ENCODE measurements at regions of chr6 and their contacts with region 1.

Region 1: DNA sequence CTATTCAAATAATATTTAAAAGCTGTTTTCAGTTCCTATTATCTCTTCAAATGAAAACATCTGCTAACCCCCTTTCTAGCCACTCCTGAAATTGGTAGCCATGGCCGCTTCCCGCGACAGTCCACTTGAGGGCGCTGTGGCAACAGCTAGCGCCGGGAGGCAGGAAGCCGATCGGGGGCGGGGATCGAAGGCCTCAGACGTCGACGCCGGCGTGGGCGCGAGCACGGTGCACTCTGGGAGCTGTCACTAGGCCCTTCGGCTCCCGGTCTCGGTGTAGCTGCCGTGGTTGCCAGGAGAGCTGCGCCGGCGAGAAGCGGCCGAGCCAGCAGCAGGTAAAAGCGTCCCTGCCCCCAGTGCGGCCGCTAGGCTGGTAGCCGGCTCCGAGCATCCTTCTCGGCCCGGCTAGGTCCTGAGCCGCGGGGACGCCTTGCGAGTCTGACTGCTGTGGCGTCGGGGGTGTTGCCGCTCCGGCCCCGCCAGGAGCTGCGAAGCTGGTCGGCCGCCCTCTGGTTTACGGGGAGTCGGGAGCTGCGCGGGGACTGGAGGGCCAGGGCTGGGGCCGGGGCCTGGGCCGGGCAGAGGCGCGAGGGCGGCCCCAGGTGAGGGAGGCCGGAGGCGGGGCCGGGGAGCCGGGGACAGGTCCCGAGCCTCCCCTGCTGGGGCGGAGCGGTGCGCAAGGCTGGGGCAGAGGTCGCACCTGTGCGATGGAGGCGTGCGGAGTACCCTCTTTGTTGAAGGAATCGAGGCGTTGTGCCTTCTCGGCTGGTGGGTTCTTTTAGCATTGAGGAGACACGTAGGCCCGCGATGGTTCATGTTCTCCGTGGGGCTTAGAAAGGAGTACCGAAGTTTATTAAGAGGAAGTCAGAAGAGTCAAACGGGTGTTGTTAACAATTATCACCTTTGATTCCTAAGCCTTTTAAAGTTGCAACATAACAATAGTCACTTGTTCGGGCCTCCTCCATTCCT is at the start of gene DOP1A:
- DNase-seq: peak; percentile 93 to 98
- ATAC-seq: peak; percentile 86 to 96 (median 88)
- H3K4me3 ChIP-seq: peak within 1 kb of the TSS; percentile 98
- H3K4me3 Mint-ChIP-seq: peak within 1 kb of the TSS; percentile 94
- H3K27ac ChIP-seq: peak within 1 kb of the TSS; percentile 96
- H3K27ac Mint-ChIP-seq: peak within 1 kb of the TSS; percentile 86 to 95
- H3K4me1 ChIP-seq: peaks cover 15% of the 10 kb centered on the region
- H3K4me1 Mint-ChIP-seq: peaks cover 31 to 37% of the 10 kb centered on the region in 2 donors
- H3K27me3 ChIP-seq: no peaks in the 10 kb centered on the region
- H3K27me3 Mint-ChIP-seq: no peaks in the 10 kb centered on the region
- CTCF ChIP-seq: peak; percentile 90
- total RNA-seq, gene DOP1A: 23.5 to 36.7 (median 30.1) TPM

Region 2: DNA sequence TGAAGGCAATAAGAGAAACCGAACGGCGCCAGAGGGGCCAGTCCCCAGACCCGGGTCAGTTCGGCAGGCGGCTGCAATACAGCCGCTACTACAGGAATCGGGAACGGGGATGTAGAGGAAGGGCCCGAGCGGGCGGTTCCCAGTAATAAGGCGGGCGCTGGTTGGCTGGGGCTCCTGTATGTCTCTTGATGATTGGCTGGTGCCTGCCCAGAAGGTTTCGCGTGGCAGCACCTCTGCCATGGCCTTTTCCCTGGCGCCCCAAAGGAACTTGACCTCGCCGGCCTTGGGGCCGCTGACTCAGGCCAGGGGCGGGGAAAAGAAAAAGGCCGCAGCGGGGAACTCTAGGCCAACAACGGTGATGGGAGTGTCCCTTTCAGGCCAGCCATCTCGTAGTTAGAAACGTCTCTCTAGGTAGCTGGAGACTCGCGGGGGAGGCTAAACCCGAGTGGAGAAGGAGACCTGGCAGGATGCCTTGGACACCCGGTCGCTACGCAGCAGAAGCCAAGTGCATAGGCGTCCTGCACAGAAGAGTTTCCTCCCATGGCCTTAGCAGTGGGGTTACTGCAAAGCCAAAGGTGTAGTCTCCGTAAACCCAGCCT is 820.0 kb before region 1 on chr6 and contains the start of gene IBTK:
- intact Hi-C with region 1: loop called (anchors 5 kb)
- DNase-seq: peak; percentile 92 to 94
- ATAC-seq: peak; percentile 89 to 94 (median 93)
- H3K4me3 ChIP-seq: peak within 1 kb of the TSS; percentile 73
- H3K4me3 Mint-ChIP-seq: peak within 1 kb of the TSS; percentile 97
- H3K27ac ChIP-seq: peak within 1 kb of the TSS; percentile 70
- H3K27ac Mint-ChIP-seq: peak within 1 kb of the TSS; percentile 94 to 97
- H3K4me1 ChIP-seq: peaks cover 18% of the 10 kb centered on the region
- H3K4me1 Mint-ChIP-seq: peaks cover 32 to 40% of the 10 kb centered on the region in 2 donors
- H3K27me3 ChIP-seq: no peaks in the 10 kb centered on the region
- H3K27me3 Mint-ChIP-seq: no peaks in the 10 kb centered on the region
- CTCF ChIP-seq: no peak
- total RNA-seq, gene IBTK: 18.3 to 23.5 (median 22.2) TPM

Region 3: GRCh38 chr6:83192871-83193746 is 125.4 kb after region 1 on chr6 and contains the starts of genes PGM3 and RWDD2A:
- intact Hi-C with region 1: loop called (anchors 1 kb)
- DNase-seq: peak; percentile 90 to 95
- ATAC-seq: peak; percentile 97 to 98 (median 97)
- H3K4me3 ChIP-seq: peak within 1 kb of the TSS; percentile 73
- H3K4me3 Mint-ChIP-seq: peak within 1 kb of the TSS; percentile 99
- H3K27ac ChIP-seq: peak within 1 kb of the TSS; percentile 48
- H3K27ac Mint-ChIP-seq: peak within 1 kb of the TSS; percentile 90 to 99
- H3K4me1 ChIP-seq: peaks cover 19% of the 10 kb centered on the region
- H3K4me1 Mint-ChIP-seq: peaks cover 18 to 20% of the 10 kb centered on the region in 2 donors
- H3K27me3 ChIP-seq: no peaks in the 10 kb centered on the region
- H3K27me3 Mint-ChIP-seq: no peaks in the 10 kb centered on the region
- CTCF ChIP-seq: no peak
- total RNA-seq, gene PGM3: 16.6 to 26.4 (median 17.2) TPM
- total RNA-seq, gene RWDD2A: 0.86 to 1.1 (median 0.93) TPM

Region 4: DNA sequence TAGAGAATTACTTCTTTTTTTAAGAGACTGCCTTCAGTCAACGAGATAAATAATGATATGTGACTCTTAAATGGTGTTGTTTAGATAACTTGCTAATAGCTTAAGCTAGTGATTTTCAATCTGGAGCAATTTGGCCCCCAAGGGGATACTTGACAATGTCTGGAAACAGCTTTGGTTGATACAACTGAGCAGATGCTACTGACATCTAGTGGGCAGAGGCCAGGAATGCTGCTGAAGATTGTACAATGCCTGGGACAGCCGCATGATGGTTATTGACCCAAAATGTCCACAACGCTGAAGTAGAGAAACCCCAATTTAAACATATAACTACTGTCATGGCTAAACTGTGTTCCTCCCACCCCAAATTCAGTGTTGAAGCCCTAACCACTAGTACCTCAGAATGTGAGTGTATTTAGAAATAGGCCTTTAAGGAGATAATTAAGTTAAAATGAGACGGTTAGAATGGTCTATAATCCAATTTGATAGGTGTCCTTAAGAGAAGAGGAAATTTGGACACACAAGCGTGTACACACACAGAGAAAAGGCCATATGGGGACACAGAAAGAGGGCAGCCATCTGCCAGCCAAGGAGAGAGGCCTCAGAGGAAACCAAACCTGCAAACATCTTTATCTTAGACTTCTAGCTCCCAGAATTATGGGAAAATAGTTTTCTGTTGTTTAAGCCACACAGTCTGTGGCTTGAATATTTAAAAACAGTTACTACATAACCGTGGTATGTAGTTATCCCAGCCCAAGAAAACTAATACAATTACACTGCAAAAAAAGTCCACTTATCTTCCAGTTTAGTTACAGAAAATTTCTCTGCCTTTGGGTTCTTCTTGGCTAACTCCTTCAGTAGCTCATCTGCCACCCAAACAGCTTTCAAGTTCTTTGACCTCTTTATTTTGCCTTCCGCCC is 147.7 kb after region 1 on chr6:
- intact Hi-C with region 1: loop called (anchors 5 kb)
- DNase-seq: peak in 1 of 2 donors; percentile 75
- ATAC-seq: peak; percentile 86 to 97 (median 96)
- H3K4me3 ChIP-seq: no peak overlapping the region
- H3K4me3 Mint-ChIP-seq: no peak overlapping the region
- H3K27ac ChIP-seq: no peak overlapping the region
- H3K27ac Mint-ChIP-seq: no peak overlapping the region
- H3K4me1 ChIP-seq: no peaks in the 10 kb centered on the region
- H3K4me1 Mint-ChIP-seq: peaks cover 0 to 4% of the 10 kb centered on the region in 2 donors
- H3K27me3 ChIP-seq: no peaks in the 10 kb centered on the region
- H3K27me3 Mint-ChIP-seq: peaks cover 15 to 16% of the 10 kb centered on the region in 2 donors
- CTCF ChIP-seq: peak; percentile 62

Region 5: GRCh38 chr6:83514866-83515466 is 447.2 kb after region 1 on chr6:
- intact Hi-C with region 1: loop called (anchors 2 kb)
- DNase-seq: peak in 1 of 2 donors; percentile 59
- ATAC-seq: peak; percentile 52 to 61 (median 54)
- H3K4me3 ChIP-seq: no peak overlapping the region
- H3K4me3 Mint-ChIP-seq: no peak overlapping the region
- H3K27ac ChIP-seq: no peak overlapping the region
- H3K27ac Mint-ChIP-seq: no peak overlapping the region
- H3K4me1 ChIP-seq: peaks cover 10% of the 10 kb centered on the region
- H3K4me1 Mint-ChIP-seq: peaks cover 10 to 17% of the 10 kb centered on the region in 2 donors
- H3K27me3 ChIP-seq: peaks cover 6% of the 10 kb centered on the region
- H3K27me3 Mint-ChIP-seq: peaks cover 29 to 56% of the 10 kb centered on the region in 2 donors
- CTCF ChIP-seq: peak; percentile 81

Region 6: DNA sequence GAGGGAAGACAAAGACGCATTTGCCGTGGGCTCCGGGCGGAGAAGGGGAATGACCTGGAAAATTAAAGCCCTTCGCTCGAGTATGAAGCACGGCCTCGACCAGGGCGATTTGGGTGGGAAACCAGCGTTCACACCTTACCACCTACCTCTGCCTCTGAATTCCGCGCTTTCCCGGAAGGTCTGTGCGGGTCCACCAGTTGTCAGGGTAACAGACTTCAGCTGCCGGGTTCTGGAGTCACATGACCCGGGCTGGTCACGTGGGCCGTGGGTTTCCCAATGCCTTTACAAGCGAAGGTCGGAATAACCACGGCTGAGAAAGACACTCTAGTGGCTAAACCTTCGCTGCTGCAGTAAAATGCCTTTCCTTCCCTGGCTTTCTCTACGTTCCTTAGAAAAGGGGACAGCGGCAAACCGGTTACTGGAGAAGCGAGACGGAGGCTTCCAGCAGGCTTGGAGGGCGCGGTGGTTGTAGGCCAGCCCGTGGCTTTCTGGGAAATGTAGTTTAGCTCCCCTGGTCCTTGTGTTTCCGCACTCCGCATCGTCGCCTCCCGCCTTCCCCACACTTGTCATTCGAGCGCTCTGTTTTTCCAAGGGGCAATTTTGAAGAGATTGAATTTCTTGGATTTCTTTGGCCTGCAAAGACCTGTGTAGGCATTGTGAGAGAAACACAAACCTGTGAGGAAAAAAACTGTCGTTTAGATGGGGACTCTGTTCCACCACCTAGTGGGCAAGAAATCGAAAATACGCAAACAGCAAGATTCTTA is 1159.9 kb after region 1 on chr6 and contains the start of gene CEP162:
- intact Hi-C with region 1: loop called (anchors 5 kb)
- DNase-seq: peak; percentile 90 to 93
- ATAC-seq: peak; percentile 92 to 94 (median 93)
- H3K4me3 ChIP-seq: peak within 1 kb of the TSS; percentile 86
- H3K4me3 Mint-ChIP-seq: peak within 1 kb of the TSS; percentile 100
- H3K27ac ChIP-seq: peak within 1 kb of the TSS; percentile 45
- H3K27ac Mint-ChIP-seq: peak within 1 kb of the TSS; percentile 82 to 91
- H3K4me1 ChIP-seq: peaks cover 8% of the 10 kb centered on the region
- H3K4me1 Mint-ChIP-seq: peaks cover 21 to 22% of the 10 kb centered on the region in 2 donors
- H3K27me3 ChIP-seq: peaks cover 14% of the 10 kb centered on the region
- H3K27me3 Mint-ChIP-seq: peaks cover 2 to 10% of the 10 kb centered on the region in 2 donors
- CTCF ChIP-seq: peak; percentile 88
- total RNA-seq, gene CEP162: 11.2 to 14.6 (median 12.0) TPM

Measured in natural killer cell (primary cell).